ENCODE measurements at regions of chr1 and their contacts with region 1.

Region 1: DNA sequence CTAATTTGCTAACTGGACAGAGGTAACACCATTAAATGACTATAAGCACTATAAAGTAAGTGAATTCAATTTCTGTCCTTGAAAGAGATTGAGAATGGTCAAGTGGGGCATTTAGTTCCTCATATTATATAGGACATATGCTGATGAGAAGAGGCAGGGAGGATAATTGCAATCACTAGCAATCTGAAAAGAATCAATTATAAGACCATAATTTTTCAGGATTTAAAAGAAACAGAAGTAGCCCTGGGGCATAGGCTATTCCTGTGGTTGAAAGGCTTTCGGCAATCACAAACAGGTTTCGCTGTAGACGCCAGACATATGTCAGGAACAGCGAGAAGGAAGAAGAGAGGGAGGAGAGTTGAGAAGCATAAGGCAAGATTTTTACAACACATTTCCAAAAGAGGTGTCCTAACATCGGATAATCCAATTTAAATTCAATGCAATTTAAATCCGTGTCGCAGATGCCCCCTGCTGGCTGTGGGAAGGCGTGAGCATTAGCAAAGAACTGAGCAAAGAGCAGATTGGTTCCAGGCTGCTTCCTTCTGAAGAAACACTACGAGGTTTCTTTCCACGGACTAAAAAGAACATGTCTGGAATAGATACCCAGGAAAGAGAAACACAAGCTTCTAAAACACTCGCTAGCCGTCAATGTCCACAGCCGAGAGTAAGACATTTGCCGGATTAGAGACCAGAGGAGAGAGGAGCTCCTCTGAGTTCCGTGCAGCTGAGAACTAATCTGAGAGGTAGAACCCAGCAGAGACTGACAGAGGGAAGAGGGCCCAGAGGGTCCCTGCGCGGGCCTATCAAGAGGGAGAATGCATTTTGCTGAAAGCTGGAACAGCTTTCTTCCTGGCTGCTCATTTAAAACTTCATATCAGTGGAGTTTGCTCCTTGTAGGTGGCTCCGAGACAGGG is 27.9 kb downstream of the RGS5 start:
- DNase-seq: peak; percentile 80
- H3K4me3 ChIP-seq: peak overlapping the region in 3 of 4 donors; percentile 19 to 36 (median 25)
- H3K27ac ChIP-seq: peak overlapping the region; percentile 69 to 79 (median 76)
- H3K4me1 ChIP-seq: peaks cover 0 to 71% (median 62%) of the 10 kb centered on the region in 4 donors
- H3K27me3 ChIP-seq: no peaks in the 10 kb centered on the region
- CTCF ChIP-seq: peak; percentile 79 to 90 (median 81)
- EP300 ChIP-seq: no peak
- POLR2A ChIP-seq: no peak

Region 2: GRCh38 chr1:162854245-162854882 is 320.4 kb before region 1 on chr1:
- intact Hi-C with region 1: loop called (anchors 2 kb)
- DNase-seq: no peak
- H3K4me3 ChIP-seq: no peak overlapping the region
- H3K27ac ChIP-seq: no peak overlapping the region
- H3K4me1 ChIP-seq: no peaks in the 10 kb centered on the region
- H3K27me3 ChIP-seq: no peaks in the 10 kb centered on the region
- CTCF ChIP-seq: peak; percentile 12 to 64 (median 51)
- EP300 ChIP-seq: no peak
- POLR2A ChIP-seq: no peak

Region 3: DNA sequence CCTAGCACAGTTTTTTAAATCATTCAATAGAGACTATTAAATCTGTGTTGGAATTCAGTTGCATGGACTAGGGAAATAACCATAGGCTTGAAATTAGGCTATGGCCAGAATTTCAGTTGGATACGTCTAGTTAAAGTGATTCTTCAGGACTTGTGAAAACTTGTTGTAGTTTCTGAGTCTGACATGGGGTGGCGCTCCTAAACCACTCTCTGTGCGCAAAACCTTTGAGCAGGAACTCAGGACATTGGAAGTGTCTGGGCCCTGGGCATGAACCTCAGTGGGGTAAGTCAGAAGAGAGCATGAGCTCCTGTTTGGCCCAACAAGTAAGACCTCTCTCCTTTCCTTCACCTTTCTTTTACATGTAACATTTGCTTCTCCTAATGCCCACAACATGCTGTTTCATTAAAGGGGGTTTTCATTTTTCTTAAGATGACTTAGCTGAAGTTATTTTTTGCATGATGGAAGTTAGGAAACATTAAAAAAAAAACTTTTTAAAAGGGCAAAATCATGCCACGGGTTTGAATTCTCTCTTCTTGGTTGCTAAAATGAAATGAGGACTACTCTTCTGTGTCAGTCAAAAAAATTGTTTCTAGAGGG is 296.7 kb before region 1 on chr1:
- intact Hi-C with region 1: loop called (anchors 2 kb)
- DNase-seq: peak; percentile 71
- H3K4me3 ChIP-seq: no peak overlapping the region
- H3K27ac ChIP-seq: no peak overlapping the region
- H3K4me1 ChIP-seq: no peaks in the 10 kb centered on the region
- H3K27me3 ChIP-seq: no peaks in the 10 kb centered on the region
- CTCF ChIP-seq: peak; percentile 51 to 76 (median 68)
- EP300 ChIP-seq: no peak
- POLR2A ChIP-seq: no peak

Region 4: DNA sequence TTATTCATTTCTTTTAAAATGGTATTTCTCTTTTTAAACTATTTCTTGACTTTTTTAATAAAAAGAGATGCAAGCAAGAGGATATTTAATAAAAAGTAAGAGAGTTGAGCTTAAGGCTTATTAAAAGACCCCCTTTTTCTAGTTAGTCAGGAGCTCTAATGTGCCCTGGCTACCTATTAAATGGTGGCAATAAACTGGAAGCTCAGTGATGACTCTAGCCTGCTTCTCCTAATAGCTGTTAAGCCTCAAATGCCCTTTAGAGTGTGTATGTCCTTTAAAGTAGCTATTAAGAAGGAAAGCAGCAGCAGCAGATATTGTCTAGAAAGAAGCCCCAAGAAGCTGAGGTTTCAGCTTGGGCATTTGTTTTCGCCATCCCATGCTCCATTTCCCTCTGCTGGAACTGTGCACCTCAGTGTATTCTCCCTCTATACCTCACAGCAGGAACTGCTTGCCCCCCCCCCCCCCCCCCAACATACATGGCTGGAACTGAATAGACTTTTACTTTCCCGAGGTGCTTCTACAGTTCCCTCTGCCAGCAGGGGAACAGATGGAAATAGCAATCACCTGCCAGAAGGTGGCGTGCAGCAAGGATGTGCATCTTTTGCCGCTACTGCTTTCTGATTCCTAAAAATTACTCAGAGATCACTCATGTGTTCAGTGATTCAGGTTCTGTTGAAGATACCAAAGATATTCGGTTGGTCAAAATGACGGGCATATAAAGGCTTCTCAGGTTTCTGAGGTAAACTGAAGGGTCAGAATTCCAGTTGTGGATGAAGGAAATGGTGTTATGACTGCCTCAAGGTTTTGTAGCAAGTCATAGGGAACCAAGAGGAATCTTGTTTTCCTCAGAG is 103.2 kb before region 1 on chr1:
- intact Hi-C with region 1: loop called (anchors 1 kb)
- DNase-seq: peak; percentile 79
- H3K4me3 ChIP-seq: peak overlapping the region in 2 of 4 donors; percentile 4 to 9
- H3K27ac ChIP-seq: peak overlapping the region in 3 of 4 donors; percentile 35 to 52 (median 47)
- H3K4me1 ChIP-seq: peaks cover 0 to 40% (median 16%) of the 10 kb centered on the region in 4 donors
- H3K27me3 ChIP-seq: no peaks in the 10 kb centered on the region
- CTCF ChIP-seq: peak; percentile 32 to 59 (median 55)
- EP300 ChIP-seq: no peak
- POLR2A ChIP-seq: no peak

Region 5: DNA sequence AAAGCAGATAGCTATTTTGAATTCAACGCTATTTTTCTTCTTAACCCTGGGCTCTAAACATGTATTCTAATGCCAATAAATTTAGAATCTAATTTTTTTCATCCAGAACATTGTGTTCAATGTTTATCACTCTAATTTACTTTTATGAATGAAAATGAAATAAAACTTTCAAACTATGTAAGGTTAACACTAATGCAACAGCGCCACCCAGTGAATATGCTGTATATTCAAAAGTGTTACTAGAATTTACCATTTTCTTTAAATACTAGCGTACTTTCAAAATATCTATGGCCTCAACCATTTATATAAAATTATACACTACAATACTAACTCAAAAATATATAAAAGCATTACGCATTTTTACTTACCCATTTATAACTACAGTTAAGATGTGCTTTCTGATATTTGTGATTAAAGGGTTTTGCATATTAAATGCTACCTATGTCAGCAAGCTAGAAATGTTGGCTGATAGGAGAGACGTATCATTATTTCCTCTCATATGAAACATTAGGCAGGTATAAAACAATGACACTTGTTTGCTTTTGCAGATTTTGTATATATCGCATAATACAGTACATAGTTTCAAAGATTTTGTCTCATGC is 141.1 kb after region 1 on chr1:
- intact Hi-C with region 1: loop called (anchors 2 kb)
- DNase-seq: no peak
- H3K4me3 ChIP-seq: no peak overlapping the region
- H3K27ac ChIP-seq: no peak overlapping the region
- H3K4me1 ChIP-seq: peaks cover 0 to 9% (median 3%) of the 10 kb centered on the region in 4 donors
- H3K27me3 ChIP-seq: no peaks in the 10 kb centered on the region
- CTCF ChIP-seq: peak; percentile 50 to 70 (median 64)
- EP300 ChIP-seq: no peak
- POLR2A ChIP-seq: no peak

Measured in sigmoid colon (tissue), 7 donors.